Posterior vena cava (tissue), 2 donors: ENCODE measurements at regions of chr4 and their contacts with region 1.

Region 1: DNA sequence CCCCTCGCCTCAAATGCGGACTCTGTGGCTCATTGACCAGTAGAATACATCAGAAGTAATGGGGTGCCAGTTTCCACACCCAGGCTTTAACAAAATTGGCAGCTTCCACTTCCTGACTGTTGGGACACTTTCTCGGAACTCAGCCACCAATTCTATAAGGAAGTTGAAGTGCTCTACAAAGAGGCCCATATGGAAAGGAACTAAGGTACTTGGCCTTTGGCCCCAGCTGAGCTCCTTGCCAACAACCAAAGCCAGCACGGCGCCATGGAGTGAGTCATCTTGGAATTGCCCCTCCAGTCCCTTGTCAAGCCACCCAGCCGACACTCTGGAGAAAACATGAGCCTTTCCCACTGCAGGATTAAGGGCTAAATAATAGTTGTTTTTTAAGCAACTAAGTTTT is 262.2 kb upstream of the INTU start:
- DNase-seq: no peak

Region 2: GRCh38 chr4:127335073-127335620 is 35.5 kb before region 1 on chr4:
- intact Hi-C with region 1: no loop called
- DNase-seq: no peak

Region 3: DNA sequence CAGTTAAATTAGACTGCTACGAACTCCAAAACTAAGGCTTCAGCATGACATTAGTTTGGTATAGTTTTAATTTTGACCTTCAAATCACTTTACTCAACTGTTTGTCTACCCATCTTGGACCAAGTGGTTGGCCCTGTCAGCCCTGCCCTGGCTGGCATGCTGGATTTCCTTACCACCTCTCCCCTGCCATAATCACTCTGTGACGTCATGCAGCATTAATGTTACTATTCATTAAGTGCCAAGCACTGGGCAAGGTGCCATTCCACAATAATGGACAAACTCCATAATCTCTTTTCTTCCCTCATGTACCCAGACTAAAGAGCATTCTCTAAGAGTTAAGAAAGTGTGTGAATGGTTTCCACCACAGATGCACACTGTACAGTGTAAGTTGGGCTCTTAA is 14.9 kb before region 1 on chr4:
- intact Hi-C with region 1: loop called in 1 of 2 experiments (anchors 1 kb)
- DNase-seq: no peak